ENCODE measurements at regions of chr22 and their contacts with region 1.

Region 1: DNA sequence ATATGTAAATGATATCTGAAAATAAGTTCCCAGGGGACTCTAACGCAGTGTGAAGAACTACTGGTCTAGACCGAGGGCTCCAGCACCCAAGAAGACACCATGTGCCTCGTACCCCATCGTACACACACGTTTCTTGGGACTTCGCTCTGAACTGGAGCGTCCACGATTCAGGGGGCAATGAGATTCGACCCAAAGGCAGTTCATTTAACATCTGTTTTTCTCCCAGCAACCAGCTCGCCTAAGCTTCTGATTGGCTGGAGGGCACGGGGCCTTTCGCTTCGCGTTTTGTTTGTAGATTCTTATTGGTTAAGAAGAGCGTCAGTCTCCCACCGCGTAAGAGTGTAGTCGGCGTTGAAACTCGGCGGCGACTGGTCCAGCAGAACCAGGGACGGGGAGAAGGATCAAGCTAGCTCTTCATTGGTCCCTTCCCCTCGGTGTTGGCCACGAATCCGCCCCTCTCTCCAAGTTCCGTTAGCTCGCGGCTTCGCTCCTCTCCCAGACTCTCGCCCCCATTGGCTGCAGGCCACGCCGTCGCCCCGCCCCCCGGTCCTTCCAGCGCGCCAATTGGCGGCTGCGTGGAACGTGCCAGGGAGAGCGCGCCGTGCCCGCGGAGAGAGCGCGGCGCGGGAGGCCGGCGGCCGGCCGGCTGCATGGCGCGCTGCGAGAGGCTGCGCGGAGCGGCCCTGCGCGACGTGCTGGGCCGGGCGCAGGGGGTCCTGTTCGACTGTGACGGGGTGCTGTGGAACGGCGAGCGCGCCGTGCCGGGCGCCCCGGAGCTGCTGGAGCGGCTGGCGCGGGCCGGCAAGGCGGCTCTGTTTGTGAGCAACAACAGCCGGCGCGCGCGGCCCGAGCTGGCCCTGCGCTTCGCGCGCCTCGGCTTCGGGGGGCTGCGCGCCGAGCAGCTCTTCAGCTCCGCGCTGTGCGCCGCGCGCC is at the start of gene PDXP:
- DNase-seq: peak; percentile 99
- ATAC-seq: peak; percentile 95
- H3K4me3 ChIP-seq: peak within 1 kb of the TSS; percentile 82
- H3K27ac ChIP-seq: peak within 1 kb of the TSS; percentile 64
- H3K4me1 ChIP-seq: peaks cover 12% of the 10 kb centered on the region
- H3K27me3 ChIP-seq: no peaks in the 10 kb centered on the region
- CTCF ChIP-seq: no peak
- EP300 ChIP-seq: no peak
- POLR2A ChIP-seq: peak; percentile 84
- RAD21 ChIP-seq: no peak
- polyA plus RNA-seq, gene PDXP: 9.8 to 15.2 TPM

Region 2: GRCh38 chr22:37608477-37609239 is 49.7 kb before region 1 on chr22 and contains the start of gene GGA1:
- CTCF ChIA-PET with region 1: interaction called, 30 read pairs
- POLR2A ChIA-PET with region 1: interaction called, 33 read pairs
- RAD21 ChIA-PET with region 1: interaction called, 61 read pairs
- SMC1A ChIA-PET with region 1: interaction called, 27 read pairs
- in situ Hi-C with region 1: no loop called
- intact Hi-C with region 1: no loop called
- DNase-seq: no peak
- ATAC-seq: peak; percentile 83
- H3K4me3 ChIP-seq: peak within 1 kb of the TSS; percentile 97
- H3K27ac ChIP-seq: peak within 1 kb of the TSS; percentile 87
- H3K4me1 ChIP-seq: peaks cover 17% of the 10 kb centered on the region
- H3K27me3 ChIP-seq: no peaks in the 10 kb centered on the region
- CTCF ChIP-seq: no peak
- EP300 ChIP-seq: peak in 1 of 2 experiments; percentile 44; a peak in 2 of 4 replicates
- POLR2A ChIP-seq: peak; percentile 77
- RAD21 ChIP-seq: no peak
- polyA plus RNA-seq, gene GGA1: 1.4 to 4.8 TPM

Region 3: GRCh38 chr22:37633625-37634416 is 24.6 kb before region 1 on chr22:
- CTCF ChIA-PET with region 1: interaction called, 261 read pairs
- POLR2A ChIA-PET with region 1: interaction called, 21 read pairs
- RAD21 ChIA-PET with region 1: interaction called, 173 read pairs
- SMC1A ChIA-PET with region 1: interaction called, 108 read pairs
- in situ Hi-C with region 1: no loop called
- intact Hi-C with region 1: no loop called
- DNase-seq: peak; percentile 60
- ATAC-seq: peak; percentile 82
- H3K4me3 ChIP-seq: peak overlapping the region; percentile 57
- H3K27ac ChIP-seq: peak overlapping the region; percentile 92
- H3K4me1 ChIP-seq: peaks cover 69% of the 10 kb centered on the region
- H3K27me3 ChIP-seq: no peaks in the 10 kb centered on the region
- CTCF ChIP-seq: peak in 1 of 3 experiments; percentile 18; a peak in 3 of 6 replicates
- EP300 ChIP-seq: peak; percentile 29 to 35; a peak in 3 of 4 replicates
- POLR2A ChIP-seq: peak; percentile 82
- RAD21 ChIP-seq: no peak

Region 4: DNA sequence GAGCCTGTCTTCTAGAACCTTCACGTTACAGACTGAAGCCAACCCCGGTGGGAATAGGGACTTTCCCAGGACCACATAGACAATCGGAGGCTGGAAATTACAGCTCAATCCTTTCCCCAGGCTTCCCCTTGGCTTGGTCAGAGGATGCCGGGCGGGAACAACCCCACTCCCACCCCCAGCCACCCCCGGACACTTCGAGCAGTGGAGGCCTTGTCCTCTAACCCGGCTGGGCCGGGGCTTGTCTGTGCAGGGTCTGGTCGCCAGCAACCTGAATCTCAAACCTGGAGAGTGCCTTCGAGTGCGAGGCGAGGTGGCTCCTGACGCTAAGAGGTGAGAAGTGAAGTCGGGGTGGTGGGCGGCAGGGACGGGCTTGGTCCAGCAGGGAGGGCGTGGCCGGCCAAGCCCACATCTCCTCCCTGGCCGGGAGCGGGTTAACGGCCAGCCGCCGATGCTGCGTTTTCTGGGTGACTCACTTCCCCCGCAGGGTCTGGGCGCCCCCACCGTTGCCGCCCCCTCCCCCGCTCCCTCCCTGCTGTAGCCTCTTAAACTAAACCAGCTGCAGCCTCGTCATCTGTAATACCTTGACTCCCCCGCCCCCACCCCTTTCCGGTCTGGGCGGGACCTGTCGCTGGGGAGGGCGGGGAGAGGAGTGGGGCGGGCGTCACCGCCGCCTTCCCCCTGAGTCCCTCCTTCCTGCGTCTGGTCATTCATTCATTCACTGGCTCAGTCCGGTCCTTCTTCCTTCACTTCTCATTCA is 18.5 kb after region 1 on chr22:
- CTCF ChIA-PET with region 1: interaction called, 414 read pairs
- POLR2A ChIA-PET with region 1: interaction called, 209 read pairs
- RAD21 ChIA-PET with region 1: interaction called, 164 read pairs
- SMC1A ChIA-PET with region 1: interaction called, 157 read pairs
- in situ Hi-C with region 1: no loop called
- intact Hi-C with region 1: loop called (anchors 1 kb)
- DNase-seq: no peak
- ATAC-seq: peak; percentile 73
- H3K4me3 ChIP-seq: peak overlapping the region; percentile 91
- H3K27ac ChIP-seq: peak overlapping the region; percentile 85
- H3K4me1 ChIP-seq: peaks cover 37% of the 10 kb centered on the region
- H3K27me3 ChIP-seq: no peaks in the 10 kb centered on the region
- CTCF ChIP-seq: no peak
- EP300 ChIP-seq: no peak
- POLR2A ChIP-seq: peak; percentile 78
- RAD21 ChIP-seq: no peak

Region 5: GRCh38 chr22:37817705-37818408 is 159.5 kb after region 1 on chr22:
- CTCF ChIA-PET with region 1: interaction called, 15 read pairs
- POLR2A ChIA-PET with region 1: no interaction called
- RAD21 ChIA-PET with region 1: interaction called, 6 read pairs
- SMC1A ChIA-PET with region 1: no interaction called
- in situ Hi-C with region 1: no loop called
- intact Hi-C with region 1: no loop called
- DNase-seq: no peak
- ATAC-seq: peak; percentile 96
- H3K4me3 ChIP-seq: peak overlapping the region; percentile 37; the same call in 1 of the 2 replicates
- H3K27ac ChIP-seq: no peak overlapping the region
- H3K4me1 ChIP-seq: peaks cover 10% of the 10 kb centered on the region
- H3K27me3 ChIP-seq: peaks cover 0 to 2% of the 10 kb centered on the region in 2 experiments; a peak in 2 of 4 replicates
- CTCF ChIP-seq: peak; percentile 90 to 97 (median 92)
- EP300 ChIP-seq: no peak
- POLR2A ChIP-seq: peak; percentile 38; the same call in 1 of the 2 replicates
- RAD21 ChIP-seq: peak; percentile 82

Region 6: GRCh38 chr22:37880668-37881440 is 222.5 kb after region 1 on chr22:
- CTCF ChIA-PET with region 1: no interaction called
- POLR2A ChIA-PET with region 1: interaction called, 10 read pairs
- RAD21 ChIA-PET with region 1: no interaction called
- SMC1A ChIA-PET with region 1: no interaction called
- in situ Hi-C with region 1: no loop called
- intact Hi-C with region 1: no loop called
- DNase-seq: no peak
- ATAC-seq: no peak
- H3K4me3 ChIP-seq: no peak overlapping the region
- H3K27ac ChIP-seq: no peak overlapping the region
- H3K4me1 ChIP-seq: no peaks in the 10 kb centered on the region
- H3K27me3 ChIP-seq: no peaks in the 10 kb centered on the region
- CTCF ChIP-seq: no peak
- EP300 ChIP-seq: no peak
- POLR2A ChIP-seq: no peak
- RAD21 ChIP-seq: no peak

Region 7: GRCh38 chr22:38230108-38230825 is 571.9 kb after region 1 on chr22:
- CTCF ChIA-PET with region 1: no interaction called
- POLR2A ChIA-PET with region 1: no interaction called
- RAD21 ChIA-PET with region 1: no interaction called
- SMC1A ChIA-PET with region 1: no interaction called
- in situ Hi-C with region 1: no loop called
- intact Hi-C with region 1: no loop called
- DNase-seq: no peak
- ATAC-seq: peak; percentile 48; the same call in 2 of the 3 replicates
- H3K4me3 ChIP-seq: no peak overlapping the region
- H3K27ac ChIP-seq: no peak overlapping the region
- H3K4me1 ChIP-seq: no peaks in the 10 kb centered on the region
- H3K27me3 ChIP-seq: no peaks in the 10 kb centered on the region
- CTCF ChIP-seq: peak; percentile 42 to 45 (median 42); a peak in 5 of 6 replicates
- EP300 ChIP-seq: no peak
- POLR2A ChIP-seq: no peak
- RAD21 ChIP-seq: peak; percentile 74

Region 8: DNA sequence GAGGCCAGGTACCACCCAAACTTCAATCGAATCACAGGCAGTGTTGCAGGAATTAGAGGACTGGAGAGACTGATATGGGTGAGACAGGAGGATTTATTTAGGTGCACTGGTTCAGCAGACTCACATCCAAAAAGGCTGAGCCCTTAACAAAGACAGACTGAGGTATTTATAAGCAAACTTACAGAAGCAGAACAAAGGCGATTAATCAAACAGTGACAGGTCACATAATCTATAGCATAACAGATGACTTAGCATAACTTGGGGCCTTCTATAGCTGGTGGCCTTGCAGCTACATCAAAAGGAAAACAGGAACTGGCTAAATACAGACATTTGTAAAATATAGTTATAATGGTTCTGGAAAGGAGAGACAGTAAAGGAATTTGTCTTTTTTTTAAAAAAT is 1325.8 kb after region 1 on chr22:
- CTCF ChIA-PET with region 1: no interaction called
- POLR2A ChIA-PET with region 1: no interaction called
- RAD21 ChIA-PET with region 1: no interaction called
- SMC1A ChIA-PET with region 1: no interaction called
- in situ Hi-C with region 1: no loop called
- intact Hi-C with region 1: no loop called
- DNase-seq: no peak
- ATAC-seq: peak; percentile 10
- H3K4me3 ChIP-seq: no peak overlapping the region
- H3K27ac ChIP-seq: peak overlapping the region; percentile 54
- H3K4me1 ChIP-seq: peaks cover 34% of the 10 kb centered on the region
- H3K27me3 ChIP-seq: no peaks in the 10 kb centered on the region
- CTCF ChIP-seq: no peak
- EP300 ChIP-seq: no peak
- POLR2A ChIP-seq: no peak
- RAD21 ChIP-seq: no peak

Measured in GM12878 (cell line).